CD8-positive, alpha-beta T cell (primary cell): ENCODE measurements at regions of chr15 and their contacts with region 1.

Region 1: GRCh38 chr15:63188926-63189871 is at the start of gene RAB8B:
- DNase-seq: peak; percentile 92 to 99 (median 98)
- ATAC-seq: peak; percentile 74
- H3K4me3 ChIP-seq: peak within 1 kb of the TSS; percentile 78 to 86
- H3K4me3 Mint-ChIP-seq: peak within 1 kb of the TSS; percentile 92
- H3K27ac ChIP-seq: peak within 1 kb of the TSS; percentile 71 to 98
- H3K27ac Mint-ChIP-seq: peak within 1 kb of the TSS; percentile 99
- H3K4me1 ChIP-seq: peaks cover 39% of the 10 kb centered on the region
- H3K4me1 Mint-ChIP-seq: peaks cover 47% of the 10 kb centered on the region
- H3K27me3 ChIP-seq: no peaks in the 10 kb centered on the region
- H3K27me3 Mint-ChIP-seq: no peaks in the 10 kb centered on the region
- CTCF ChIP-seq: no peak
- total RNA-seq, gene RAB8B: 145 to 146 TPM

Region 2: GRCh38 chr15:63122002-63122893 is 67.0 kb before region 1 on chr15:
- CTCF ChIA-PET with region 1: no interaction called
- POLR2A ChIA-PET with region 1: interaction called, 3 read pairs
- intact Hi-C with region 1: loop called (anchors 1 kb)
- DNase-seq: peak; percentile 19 to 87 (median 69)
- ATAC-seq: peak; percentile 81
- H3K4me3 ChIP-seq: peak overlapping the region; percentile 83 to 87
- H3K4me3 Mint-ChIP-seq: peak overlapping the region; percentile 87
- H3K27ac ChIP-seq: peak overlapping the region; percentile 61 to 66
- H3K27ac Mint-ChIP-seq: peak overlapping the region; percentile 90
- H3K4me1 ChIP-seq: peaks cover 7% of the 10 kb centered on the region
- H3K4me1 Mint-ChIP-seq: peaks cover 17% of the 10 kb centered on the region
- H3K27me3 ChIP-seq: no peaks in the 10 kb centered on the region
- H3K27me3 Mint-ChIP-seq: no peaks in the 10 kb centered on the region
- CTCF ChIP-seq: no peak

Region 3: DNA sequence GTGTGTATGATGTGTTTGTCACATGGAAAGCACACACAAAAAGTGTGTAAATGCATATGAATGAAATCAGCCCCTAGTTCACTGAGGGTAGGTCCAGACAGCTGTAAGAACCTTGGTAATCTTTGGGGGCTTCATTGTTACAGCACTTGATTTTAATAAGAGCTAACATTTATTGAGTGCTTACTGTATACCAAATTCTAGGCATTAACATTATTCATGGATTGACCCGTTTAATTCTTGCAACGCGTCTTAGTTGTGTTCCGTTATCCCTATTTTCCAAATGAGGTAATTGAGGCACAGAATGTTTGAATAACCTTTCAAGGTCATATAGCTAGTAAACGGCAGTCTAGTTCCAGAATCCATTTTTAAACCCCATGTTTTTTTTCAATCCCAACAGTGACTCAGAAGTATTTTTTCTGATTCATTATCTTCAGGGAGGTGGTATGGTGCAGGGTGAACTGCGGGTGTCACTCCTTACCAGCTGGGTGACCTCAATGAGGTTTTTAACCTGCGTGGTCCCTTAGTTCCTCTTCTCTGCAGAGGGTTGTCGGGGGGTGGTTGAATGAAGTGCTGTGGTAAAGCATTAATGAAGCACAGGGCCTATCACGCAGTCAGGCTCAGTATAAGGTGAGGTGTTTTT is 14.4 kb after region 1 on chr15:
- CTCF ChIA-PET with region 1: interaction called, 12 read pairs
- POLR2A ChIA-PET with region 1: interaction called, 13 read pairs
- intact Hi-C with region 1: loop called (anchors 1 kb)
- DNase-seq: peak; percentile 4 to 87 (median 60)
- ATAC-seq: peak; percentile 97
- H3K4me3 ChIP-seq: no peak overlapping the region
- H3K4me3 Mint-ChIP-seq: no peak overlapping the region
- H3K27ac ChIP-seq: no peak overlapping the region
- H3K27ac Mint-ChIP-seq: peak overlapping the region; percentile 14
- H3K4me1 ChIP-seq: peaks cover 60% of the 10 kb centered on the region
- H3K4me1 Mint-ChIP-seq: peaks cover 90% of the 10 kb centered on the region
- H3K27me3 ChIP-seq: no peaks in the 10 kb centered on the region
- H3K27me3 Mint-ChIP-seq: no peaks in the 10 kb centered on the region
- CTCF ChIP-seq: no peak

Region 4: GRCh38 chr15:63226966-63227401 is 37.8 kb after region 1 on chr15:
- CTCF ChIA-PET with region 1: interaction called, 16 read pairs
- POLR2A ChIA-PET with region 1: interaction called, 26 read pairs
- intact Hi-C with region 1: loop called (anchors 2 to 5 kb)
- DNase-seq: no peak
- ATAC-seq: no peak
- H3K4me3 ChIP-seq: no peak overlapping the region
- H3K4me3 Mint-ChIP-seq: no peak overlapping the region
- H3K27ac ChIP-seq: peak overlapping the region in 1 of 2 experiments; percentile 42
- H3K27ac Mint-ChIP-seq: peak overlapping the region; percentile 56
- H3K4me1 ChIP-seq: peaks cover 26% of the 10 kb centered on the region
- H3K4me1 Mint-ChIP-seq: peaks cover 75% of the 10 kb centered on the region
- H3K27me3 ChIP-seq: no peaks in the 10 kb centered on the region
- H3K27me3 Mint-ChIP-seq: no peaks in the 10 kb centered on the region
- CTCF ChIP-seq: no peak

Region 5: DNA sequence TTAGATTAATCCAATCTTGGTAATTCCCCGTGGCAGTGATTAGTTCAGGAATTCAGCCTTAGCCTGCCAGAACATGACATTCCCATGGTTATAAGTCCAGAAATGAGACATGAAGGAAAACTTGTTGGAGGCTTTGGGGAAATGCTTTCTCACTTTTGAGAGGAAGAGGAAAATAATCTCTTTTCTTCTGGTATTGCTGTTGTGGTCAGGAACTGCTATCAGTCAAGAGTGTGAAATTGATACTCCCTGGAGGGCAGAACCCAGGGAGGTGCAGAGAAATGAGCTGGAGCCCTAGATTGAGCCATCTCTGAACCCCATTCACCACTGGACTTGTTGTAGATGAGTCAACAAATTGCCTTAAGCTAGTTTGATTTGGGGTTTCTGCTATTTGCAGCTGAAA is 49.6 kb after region 1 on chr15:
- CTCF ChIA-PET with region 1: interaction called, 4 read pairs
- POLR2A ChIA-PET with region 1: interaction called, 26 read pairs
- intact Hi-C with region 1: loop called in 1 of 2 experiments (anchors 5 kb)
- DNase-seq: peak in 2 of 9 experiments; percentile 22 to 48
- ATAC-seq: no peak
- H3K4me3 ChIP-seq: no peak overlapping the region
- H3K4me3 Mint-ChIP-seq: no peak overlapping the region
- H3K27ac ChIP-seq: no peak overlapping the region
- H3K27ac Mint-ChIP-seq: no peak overlapping the region
- H3K4me1 ChIP-seq: peaks cover 19% of the 10 kb centered on the region
- H3K4me1 Mint-ChIP-seq: peaks cover 72% of the 10 kb centered on the region
- H3K27me3 ChIP-seq: no peaks in the 10 kb centered on the region
- H3K27me3 Mint-ChIP-seq: no peaks in the 10 kb centered on the region
- CTCF ChIP-seq: no peak

Region 6: DNA sequence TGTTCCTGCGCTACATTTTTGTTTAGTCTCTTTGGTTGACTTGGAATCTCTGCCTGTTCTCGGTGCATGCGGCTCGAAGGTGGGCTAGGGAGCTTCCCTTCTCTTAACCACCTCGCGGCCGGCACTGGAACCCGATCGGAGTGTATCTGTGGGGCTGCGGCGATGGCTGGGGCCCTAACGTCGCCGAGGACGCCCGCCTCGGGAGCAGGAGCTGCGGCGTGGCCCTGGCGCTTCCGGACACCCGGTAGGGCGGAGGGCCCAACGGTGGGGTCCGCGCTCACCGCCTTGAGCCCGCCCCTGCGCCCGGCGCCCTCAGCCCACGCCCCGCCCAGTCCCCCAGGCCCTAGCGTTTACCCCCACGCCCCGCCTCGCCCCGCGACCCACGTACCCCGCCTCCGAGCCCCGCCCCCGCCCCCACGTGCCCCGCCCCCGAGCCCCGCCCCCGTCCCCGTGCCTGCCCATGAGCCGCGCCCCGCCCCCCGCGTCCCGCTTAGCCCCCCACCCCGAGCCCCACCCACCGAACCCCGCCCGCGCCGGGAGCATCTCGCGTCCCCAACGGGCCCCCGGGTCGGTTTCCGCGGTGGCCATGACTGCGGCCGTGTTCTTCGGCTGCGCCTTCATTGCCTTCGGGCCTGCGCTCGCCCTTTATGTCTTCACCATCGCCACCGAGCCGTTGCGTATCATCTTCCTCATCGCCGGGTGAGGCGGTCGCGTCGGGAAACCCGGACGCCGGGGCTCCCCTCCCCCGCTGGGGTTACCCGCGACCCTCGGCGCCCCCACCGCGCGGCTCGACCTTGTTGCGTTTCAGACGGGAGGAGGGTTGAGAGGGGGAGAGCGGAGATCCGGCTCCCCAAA is 88.1 kb after region 1 on chr15 and contains the start of gene APH1B:
- CTCF ChIA-PET with region 1: interaction called, 3 read pairs
- POLR2A ChIA-PET with region 1: interaction called, 16 read pairs
- intact Hi-C with region 1: loop called (anchors 1 kb)
- DNase-seq: peak; percentile 51 to 87 (median 76)
- ATAC-seq: peak; percentile 88
- H3K4me3 ChIP-seq: peak within 1 kb of the TSS; percentile 79 to 80
- H3K4me3 Mint-ChIP-seq: peak within 1 kb of the TSS; percentile 89
- H3K27ac ChIP-seq: peak within 1 kb of the TSS; percentile 62 to 74
- H3K27ac Mint-ChIP-seq: peak within 1 kb of the TSS; percentile 91
- H3K4me1 ChIP-seq: peaks cover 19% of the 10 kb centered on the region
- H3K4me1 Mint-ChIP-seq: peaks cover 36% of the 10 kb centered on the region
- H3K27me3 ChIP-seq: no peaks in the 10 kb centered on the region
- H3K27me3 Mint-ChIP-seq: no peaks in the 10 kb centered on the region
- CTCF ChIP-seq: no peak
- total RNA-seq, gene APH1B: 10.8 to 13.6 TPM

Region 7: GRCh38 chr15:63487076-63487757 is 298.0 kb after region 1 on chr15:
- CTCF ChIA-PET with region 1: no interaction called
- POLR2A ChIA-PET with region 1: no interaction called
- intact Hi-C with region 1: no loop called
- DNase-seq: peak; percentile 83 to 95 (median 88)
- ATAC-seq: peak; percentile 97
- H3K4me3 ChIP-seq: no peak overlapping the region
- H3K4me3 Mint-ChIP-seq: peak overlapping the region; percentile 40
- H3K27ac ChIP-seq: no peak overlapping the region
- H3K27ac Mint-ChIP-seq: peak overlapping the region; percentile 80
- H3K4me1 ChIP-seq: peaks cover 48% of the 10 kb centered on the region
- H3K4me1 Mint-ChIP-seq: peaks cover 62% of the 10 kb centered on the region
- H3K27me3 ChIP-seq: no peaks in the 10 kb centered on the region
- H3K27me3 Mint-ChIP-seq: no peaks in the 10 kb centered on the region
- CTCF ChIP-seq: peak; percentile 98

Region 8: DNA sequence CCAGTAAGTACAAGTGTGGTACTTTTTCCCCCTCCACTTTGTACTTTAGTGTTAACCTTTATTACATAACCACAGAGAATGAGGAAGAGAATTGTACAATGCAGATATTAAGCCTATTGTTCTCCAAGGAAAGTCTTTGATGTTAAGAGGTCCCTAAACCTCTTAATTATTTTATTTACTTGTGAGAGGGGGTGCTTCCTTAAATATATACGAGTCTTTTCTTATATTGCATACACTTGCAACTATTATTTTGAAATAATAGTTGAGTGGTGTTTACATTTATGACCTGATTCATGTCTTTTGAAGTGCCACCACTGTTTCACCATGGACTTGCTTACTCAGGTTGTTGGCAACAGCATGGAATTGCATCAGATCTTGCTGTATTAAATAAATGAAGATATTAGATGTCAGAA is 325.3 kb after region 1 on chr15:
- CTCF ChIA-PET with region 1: no interaction called
- POLR2A ChIA-PET with region 1: no interaction called
- intact Hi-C with region 1: no loop called
- DNase-seq: peak in 1 of 9 experiments; percentile 31
- ATAC-seq: no peak
- H3K4me3 ChIP-seq: no peak overlapping the region
- H3K4me3 Mint-ChIP-seq: peak overlapping the region; percentile 26
- H3K27ac ChIP-seq: no peak overlapping the region
- H3K27ac Mint-ChIP-seq: peak overlapping the region; percentile 22
- H3K4me1 ChIP-seq: peaks cover 96% of the 10 kb centered on the region
- H3K4me1 Mint-ChIP-seq: peaks cover 90% of the 10 kb centered on the region
- H3K27me3 ChIP-seq: no peaks in the 10 kb centered on the region
- H3K27me3 Mint-ChIP-seq: no peaks in the 10 kb centered on the region
- CTCF ChIP-seq: no peak